ENCODE measurements at regions of chr18 and their contacts with region 1.

Region 1: DNA sequence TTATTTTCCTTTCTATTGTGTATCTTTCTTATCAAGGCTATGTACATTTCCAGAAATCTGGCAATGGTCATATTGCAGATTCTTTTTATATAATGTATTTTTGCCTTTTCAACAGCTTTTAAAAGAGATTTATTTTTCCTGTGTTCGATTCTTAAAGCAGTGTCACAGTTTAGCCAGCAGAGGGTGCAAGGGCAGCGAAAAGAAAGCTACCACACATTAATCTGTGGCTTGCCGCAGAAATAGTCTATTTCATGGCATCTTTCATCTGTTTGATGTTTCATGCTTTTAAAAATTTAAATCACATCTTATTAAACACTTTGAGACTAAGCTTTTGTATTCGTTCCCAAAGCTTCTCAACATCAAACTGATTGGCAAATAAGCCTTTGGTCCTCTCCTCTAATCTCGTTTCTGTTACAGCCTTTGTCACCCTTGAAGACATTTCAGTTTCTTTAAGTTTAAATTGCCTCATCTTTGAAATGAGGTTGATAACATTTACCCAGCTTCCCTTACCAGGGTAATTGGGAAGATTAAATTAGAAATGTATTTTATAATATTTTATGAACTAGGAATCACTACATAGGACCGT is 73.3 kb downstream of the PIK3C3 start:
- DNase-seq: peak; percentile 46
- ATAC-seq: no peak
- H3K4me3 Mint-ChIP-seq: no peak overlapping the region
- H3K27ac Mint-ChIP-seq: no peak overlapping the region
- H3K4me1 Mint-ChIP-seq: peaks cover 21% of the 10 kb centered on the region
- H3K27me3 Mint-ChIP-seq: no peaks in the 10 kb centered on the region

Region 2: DNA sequence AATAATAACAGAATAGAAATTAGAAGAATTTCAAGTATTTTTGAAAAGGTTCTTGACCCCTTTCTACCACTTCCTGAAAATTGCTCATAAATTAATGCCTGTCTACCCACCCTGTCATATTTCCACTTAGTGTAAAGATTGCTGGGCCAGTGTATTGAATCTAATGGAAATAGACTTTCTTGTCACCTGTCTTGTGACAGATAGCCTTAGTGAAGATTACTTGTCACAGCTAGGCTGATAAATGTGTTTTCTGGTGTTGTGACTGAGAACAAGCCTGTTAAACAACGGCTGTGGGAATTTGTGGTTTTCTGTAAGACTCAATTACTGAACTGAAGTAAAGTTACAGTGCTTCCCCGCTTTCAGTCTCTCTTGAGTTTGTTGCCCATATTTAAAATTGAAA is 36.3 kb before region 1 on chr18:
- CTCF ChIA-PET with region 1: interaction called, 12 read pairs
- POLR2A ChIA-PET with region 1: no interaction called
- DNase-seq: no peak
- ATAC-seq: no peak
- H3K4me3 Mint-ChIP-seq: no peak overlapping the region
- H3K27ac Mint-ChIP-seq: no peak overlapping the region
- H3K4me1 Mint-ChIP-seq: no peaks in the 10 kb centered on the region
- H3K27me3 Mint-ChIP-seq: no peaks in the 10 kb centered on the region

Region 3: DNA sequence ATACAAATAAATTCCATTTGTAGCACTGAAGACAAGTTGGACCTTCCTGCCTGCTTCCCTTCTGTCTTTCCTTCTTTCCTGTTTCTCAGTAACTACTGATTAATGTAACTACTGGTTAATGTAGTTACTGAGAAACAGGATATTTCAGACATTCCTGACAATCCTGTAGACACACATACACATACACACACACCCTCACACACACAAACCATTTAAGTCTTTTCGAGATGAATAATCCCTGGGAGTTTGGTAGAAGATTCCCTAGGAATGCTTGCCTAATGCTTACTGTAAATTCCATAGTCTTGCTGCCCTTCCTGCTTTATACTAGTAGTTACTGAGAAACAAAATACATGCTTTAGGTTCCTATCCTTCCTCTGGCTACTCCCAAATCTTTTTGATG is 10.6 kb after region 1 on chr18:
- CTCF ChIA-PET with region 1: interaction called, 30 read pairs
- POLR2A ChIA-PET with region 1: no interaction called
- DNase-seq: no peak
- ATAC-seq: no peak
- H3K4me3 Mint-ChIP-seq: no peak overlapping the region
- H3K27ac Mint-ChIP-seq: no peak overlapping the region
- H3K4me1 Mint-ChIP-seq: no peaks in the 10 kb centered on the region
- H3K27me3 Mint-ChIP-seq: no peaks in the 10 kb centered on the region

Region 4: GRCh38 chr18:42048150-42048549 is 19.8 kb after region 1 on chr18:
- CTCF ChIA-PET with region 1: interaction called, 32 read pairs
- POLR2A ChIA-PET with region 1: no interaction called
- DNase-seq: no peak
- ATAC-seq: no peak
- H3K4me3 Mint-ChIP-seq: no peak overlapping the region
- H3K27ac Mint-ChIP-seq: no peak overlapping the region
- H3K4me1 Mint-ChIP-seq: peaks cover 7% of the 10 kb centered on the region
- H3K27me3 Mint-ChIP-seq: no peaks in the 10 kb centered on the region

Region 5: GRCh38 chr18:42053188-42053781 is 24.9 kb after region 1 on chr18:
- CTCF ChIA-PET with region 1: interaction called, 32 read pairs
- POLR2A ChIA-PET with region 1: no interaction called
- DNase-seq: peak; percentile 72
- ATAC-seq: peak; percentile 79
- H3K4me3 Mint-ChIP-seq: no peak overlapping the region
- H3K27ac Mint-ChIP-seq: no peak overlapping the region
- H3K4me1 Mint-ChIP-seq: peaks cover 4% of the 10 kb centered on the region
- H3K27me3 Mint-ChIP-seq: no peaks in the 10 kb centered on the region

Region 6: GRCh38 chr18:42064109-42064508 is 35.8 kb after region 1 on chr18:
- CTCF ChIA-PET with region 1: interaction called, 12 read pairs
- POLR2A ChIA-PET with region 1: no interaction called
- DNase-seq: no peak
- ATAC-seq: no peak
- H3K4me3 Mint-ChIP-seq: no peak overlapping the region
- H3K27ac Mint-ChIP-seq: no peak overlapping the region
- H3K4me1 Mint-ChIP-seq: no peaks in the 10 kb centered on the region
- H3K27me3 Mint-ChIP-seq: no peaks in the 10 kb centered on the region

Region 7: GRCh38 chr18:42092848-42093247 is 64.5 kb after region 1 on chr18:
- CTCF ChIA-PET with region 1: no interaction called
- POLR2A ChIA-PET with region 1: no interaction called
- DNase-seq: no peak
- ATAC-seq: no peak
- H3K4me3 Mint-ChIP-seq: no peak overlapping the region
- H3K27ac Mint-ChIP-seq: no peak overlapping the region
- H3K4me1 Mint-ChIP-seq: no peaks in the 10 kb centered on the region
- H3K27me3 Mint-ChIP-seq: peaks cover 6% of the 10 kb centered on the region